ENCODE measurements at regions of chr6 and their contacts with region 1.

Region 1: GRCh38 chr6:139355172-139355571 is 19.3 kb downstream of the CITED2 start:
- DNase-seq: no peak
- H3K4me3 ChIP-seq: no peak overlapping the region
- H3K4me1 ChIP-seq: no peaks in the 10 kb centered on the region; the same call in 1 of the 2 replicates
- H3K27me3 ChIP-seq: no peaks in the 10 kb centered on the region

Region 2: GRCh38 chr6:138278326-138278725 is 1076.8 kb before region 1 on chr6:
- in situ Hi-C with region 1: no loop called
- DNase-seq: peak in 1 of 2 experiments; percentile 17
- H3K4me3 ChIP-seq: no peak overlapping the region
- H3K4me1 ChIP-seq: no peaks in the 10 kb centered on the region
- H3K27me3 ChIP-seq: no peaks in the 10 kb centered on the region

Region 3: GRCh38 chr6:138817822-138818308 is 537.3 kb before region 1 on chr6:
- in situ Hi-C with region 1: loop called (anchors 10 kb)
- DNase-seq: no peak
- H3K4me3 ChIP-seq: no peak overlapping the region
- H3K4me1 ChIP-seq: no peaks in the 10 kb centered on the region
- H3K27me3 ChIP-seq: no peaks in the 10 kb centered on the region

Region 4: GRCh38 chr6:139230391-139230840 is 124.8 kb before region 1 on chr6:
- in situ Hi-C with region 1: loop called (anchors 5 kb)
- DNase-seq: peak; percentile 4 to 32
- H3K4me3 ChIP-seq: no peak overlapping the region
- H3K4me1 ChIP-seq: peaks cover 7% of the 10 kb centered on the region
- H3K27me3 ChIP-seq: no peaks in the 10 kb centered on the region

Measured in HAP-1 (cell line).